ENCODE measurements at regions of chr2 and their contacts with region 1.

Region 1: DNA sequence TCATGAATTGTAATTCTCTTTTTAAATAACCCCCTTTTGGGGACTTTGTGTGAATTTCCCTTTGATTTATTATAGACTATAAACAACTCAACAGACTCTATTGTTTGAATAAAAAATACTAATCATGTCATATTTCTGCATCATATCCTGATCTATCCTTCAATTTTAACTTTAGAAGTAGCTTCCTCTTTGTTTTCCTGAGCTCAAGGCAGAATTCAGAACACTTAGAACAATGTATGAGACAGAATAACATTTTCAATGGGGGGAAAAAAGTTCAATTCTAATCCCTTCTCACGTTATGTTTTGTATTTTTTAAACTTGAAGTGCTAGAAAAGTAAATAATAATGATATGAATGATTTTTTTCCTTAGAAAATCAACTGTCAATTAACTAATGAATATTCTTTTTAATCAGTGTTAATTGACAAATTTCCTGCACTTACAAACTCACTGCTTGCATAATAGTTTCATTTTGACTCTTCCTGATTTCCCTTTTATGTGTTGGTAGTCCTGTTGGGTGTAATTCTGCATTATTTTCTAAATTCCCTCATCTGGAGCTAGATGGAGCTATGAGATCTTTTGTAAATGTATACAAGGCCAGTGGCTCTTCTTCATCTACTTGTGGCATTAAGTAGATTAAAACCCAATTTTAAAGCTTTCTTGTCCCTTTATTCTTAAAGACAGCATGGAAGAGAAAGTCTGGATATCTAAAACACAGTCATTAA is 326.1 kb downstream of the PARD3B start:
- DNase-seq: peak in 1 of 42 donors; percentile 12

Region 2: DNA sequence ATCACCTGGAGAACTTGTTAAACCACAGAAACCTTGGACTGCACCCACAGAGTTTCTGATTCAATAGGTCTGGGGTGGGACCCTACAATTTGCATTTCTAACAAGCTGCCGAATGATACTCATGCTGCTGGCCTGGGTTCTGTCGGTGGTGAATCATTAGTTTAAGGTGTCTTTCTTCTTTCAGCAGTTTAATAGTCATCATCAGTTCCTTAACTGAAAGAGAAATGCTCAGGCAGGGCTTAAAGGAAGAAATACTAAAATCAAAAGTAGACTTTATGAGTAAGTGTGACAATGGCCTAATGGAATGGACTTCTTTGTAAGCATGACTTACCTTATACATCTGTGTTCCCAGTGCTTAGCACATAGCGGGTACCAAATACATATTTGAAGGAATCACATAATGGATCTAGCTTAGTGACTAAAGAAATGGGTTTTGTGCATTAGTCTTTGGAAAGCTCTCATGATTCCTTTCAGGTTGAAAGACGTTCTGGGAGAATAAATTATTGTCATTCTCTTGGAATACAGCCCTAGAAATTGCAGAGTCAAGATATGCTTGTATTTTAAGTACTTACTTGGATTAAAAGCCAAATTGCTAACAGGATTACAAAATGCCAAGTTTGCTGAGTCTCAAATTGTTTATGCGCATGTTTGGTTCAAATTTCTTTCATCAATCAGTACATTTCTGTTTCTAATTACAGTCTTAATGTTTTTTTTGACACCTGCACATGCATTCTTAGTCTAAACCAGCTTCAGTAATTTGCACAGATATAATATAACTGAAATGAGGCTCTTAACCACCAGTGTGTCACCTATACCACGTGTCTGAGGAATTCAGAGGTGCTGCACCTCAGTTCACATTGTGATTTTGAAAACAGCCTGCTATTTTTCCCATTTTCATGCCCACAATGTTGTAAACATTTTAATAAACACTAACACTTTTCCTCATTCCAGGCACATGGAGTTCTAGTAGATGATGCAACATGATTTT is 590.6 kb after region 1 on chr2:
- intact Hi-C with region 1: no loop called
- DNase-seq: no peak

Region 3: DNA sequence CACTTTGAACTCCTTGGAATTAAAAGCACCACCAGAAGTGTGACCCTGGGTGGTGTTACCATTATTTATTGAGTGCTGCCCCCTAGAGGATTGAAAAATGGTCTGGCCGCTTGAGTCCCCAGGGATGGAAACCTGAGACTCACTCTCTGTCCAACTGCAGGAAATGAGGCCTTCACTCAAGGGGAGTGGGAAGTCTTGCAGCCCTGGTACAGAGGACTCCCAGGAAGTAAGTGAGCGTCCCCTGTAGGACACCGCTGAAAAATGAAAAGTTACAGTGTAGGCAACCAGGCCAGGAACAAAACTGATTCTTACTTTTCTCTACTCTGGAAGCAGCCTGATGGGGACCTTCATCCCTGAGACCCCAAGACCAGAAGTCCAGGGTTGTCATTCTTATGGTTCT is 808.7 kb after region 1 on chr2:
- intact Hi-C with region 1: loop called (anchors 10 kb)
- DNase-seq: peak in 31 of 42 donors; percentile 28 to 87 (median 63)